HEK293 (cell line): ENCODE measurements at regions of chr22 and their contacts with region 1.

Region 1: DNA sequence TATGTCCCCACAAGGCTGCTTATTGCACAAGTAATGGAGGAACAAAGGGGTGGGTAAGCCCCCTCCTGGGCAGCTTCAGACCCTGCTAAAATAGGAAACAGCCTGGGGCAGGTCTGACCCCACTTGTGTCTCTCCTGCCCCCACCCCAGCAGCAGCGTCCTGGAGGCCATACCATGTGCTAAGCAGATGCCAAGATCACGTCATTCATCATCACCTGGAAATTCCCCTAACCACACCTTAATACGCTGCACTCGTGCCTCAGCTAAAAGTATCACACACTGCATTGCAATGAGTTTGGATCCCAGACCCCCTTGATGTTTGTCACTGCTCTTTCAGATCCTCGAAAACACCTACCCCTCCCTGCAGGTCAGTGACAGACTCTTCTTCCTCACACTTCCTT is 27.8 kb upstream of the GGTLC2 start:
- H3K4me3 ChIP-seq: no peak overlapping the region
- H3K27ac ChIP-seq: no peak overlapping the region
- H3K4me1 ChIP-seq: no peaks in the 10 kb centered on the region
- CTCF ChIP-seq: no peak

Region 2: DNA sequence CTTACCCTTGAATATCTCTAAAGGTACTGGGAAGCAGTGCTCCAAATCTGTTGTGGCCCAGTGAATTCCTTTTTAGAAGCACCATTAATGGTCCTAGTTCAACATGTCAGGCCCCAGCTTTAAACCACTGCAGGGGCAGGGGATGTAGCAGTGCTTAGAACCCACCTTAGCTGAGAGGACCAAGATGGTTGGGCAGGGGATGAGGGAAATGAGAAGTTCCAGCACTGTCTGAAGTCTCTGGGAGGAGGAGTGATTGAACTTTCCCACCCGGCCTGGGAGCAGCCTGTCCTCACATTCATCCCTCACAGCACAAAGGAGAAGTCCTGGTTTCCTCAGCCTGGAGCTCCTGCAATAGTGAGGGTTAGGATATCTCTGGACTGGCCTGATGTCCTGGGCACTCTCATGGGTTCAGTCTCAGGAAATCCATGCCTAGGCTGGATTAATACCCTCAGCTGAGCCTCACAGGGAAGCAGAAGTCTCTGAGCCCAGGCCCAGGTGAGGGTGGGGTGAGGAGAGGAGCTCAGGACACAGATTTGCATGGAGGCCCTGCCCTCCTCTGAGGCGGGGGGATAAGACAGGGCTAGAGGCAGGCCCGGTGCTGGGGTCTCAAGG is 29.0 kb before region 1 on chr22:
- CTCF ChIA-PET with region 1: interaction called, 15 read pairs
- POLR2A ChIA-PET with region 1: no interaction called
- H3K4me3 ChIP-seq: no peak overlapping the region
- H3K27ac ChIP-seq: no peak overlapping the region
- H3K4me1 ChIP-seq: no peaks in the 10 kb centered on the region
- CTCF ChIP-seq: no peak

Region 3: GRCh38 chr22:22593964-22594656 is 22.5 kb before region 1 on chr22:
- CTCF ChIA-PET with region 1: interaction called, 15 read pairs
- POLR2A ChIA-PET with region 1: no interaction called
- H3K4me3 ChIP-seq: no peak overlapping the region
- H3K27ac ChIP-seq: no peak overlapping the region
- H3K4me1 ChIP-seq: no peaks in the 10 kb centered on the region
- CTCF ChIP-seq: peak; percentile 66

Region 4: GRCh38 chr22:22600531-22601261 is 15.9 kb before region 1 on chr22:
- CTCF ChIA-PET with region 1: interaction called, 11 read pairs
- POLR2A ChIA-PET with region 1: no interaction called
- H3K4me3 ChIP-seq: no peak overlapping the region
- H3K27ac ChIP-seq: no peak overlapping the region
- H3K4me1 ChIP-seq: no peaks in the 10 kb centered on the region
- CTCF ChIP-seq: no peak